PC-9 (cell line): ENCODE measurements at regions of chr16 and their contacts with region 1.

Region 1: GRCh38 chr16:77211880-77212740 is 12.9 kb downstream of the SYCE1L start:
- DNase-seq: peak in 1 of 2 experiments; percentile 71
- H3K4me3 ChIP-seq: peak overlapping the region; percentile 78
- H3K27ac ChIP-seq: no peak overlapping the region
- H3K4me1 ChIP-seq: peaks cover 18% of the 10 kb centered on the region
- H3K27me3 ChIP-seq: no peaks in the 10 kb centered on the region
- CTCF ChIP-seq: no peak; the same call in 1 of the 2 replicates

Region 2: DNA sequence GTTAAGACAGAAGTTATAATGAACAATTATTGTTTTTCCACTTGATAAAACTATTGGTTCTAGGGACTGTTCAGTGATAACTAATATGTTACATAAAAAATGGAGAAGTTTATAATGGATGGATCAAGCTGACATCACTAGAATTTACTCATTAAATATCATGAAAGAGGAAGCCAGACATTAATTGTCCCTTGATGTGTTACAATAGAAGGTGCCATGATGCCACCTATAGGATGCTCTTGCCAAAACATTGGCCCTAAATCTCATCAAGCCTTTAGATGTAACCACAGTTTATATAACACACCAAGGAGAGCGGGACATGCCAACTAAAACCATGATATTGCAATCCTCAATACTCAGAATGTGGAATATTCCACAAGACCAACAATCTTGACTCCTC is 169.0 kb before region 1 on chr16:
- CTCF ChIA-PET with region 1: no interaction called
- POLR2A ChIA-PET with region 1: no interaction called
- intact Hi-C with region 1: no loop called
- DNase-seq: no peak
- H3K4me3 ChIP-seq: no peak overlapping the region
- H3K27ac ChIP-seq: no peak overlapping the region
- H3K4me1 ChIP-seq: no peaks in the 10 kb centered on the region
- H3K27me3 ChIP-seq: no peaks in the 10 kb centered on the region
- CTCF ChIP-seq: peak; percentile 54

Region 3: GRCh38 chr16:77183137-77183536 is 29.0 kb before region 1 on chr16:
- CTCF ChIA-PET with region 1: interaction called, 11 read pairs
- POLR2A ChIA-PET with region 1: interaction called, 4 read pairs
- intact Hi-C with region 1: no loop called
- DNase-seq: peak in 1 of 2 experiments; percentile 41
- H3K4me3 ChIP-seq: no peak overlapping the region
- H3K27ac ChIP-seq: no peak overlapping the region
- H3K4me1 ChIP-seq: no peaks in the 10 kb centered on the region
- H3K27me3 ChIP-seq: no peaks in the 10 kb centered on the region
- CTCF ChIP-seq: no peak

Region 4: DNA sequence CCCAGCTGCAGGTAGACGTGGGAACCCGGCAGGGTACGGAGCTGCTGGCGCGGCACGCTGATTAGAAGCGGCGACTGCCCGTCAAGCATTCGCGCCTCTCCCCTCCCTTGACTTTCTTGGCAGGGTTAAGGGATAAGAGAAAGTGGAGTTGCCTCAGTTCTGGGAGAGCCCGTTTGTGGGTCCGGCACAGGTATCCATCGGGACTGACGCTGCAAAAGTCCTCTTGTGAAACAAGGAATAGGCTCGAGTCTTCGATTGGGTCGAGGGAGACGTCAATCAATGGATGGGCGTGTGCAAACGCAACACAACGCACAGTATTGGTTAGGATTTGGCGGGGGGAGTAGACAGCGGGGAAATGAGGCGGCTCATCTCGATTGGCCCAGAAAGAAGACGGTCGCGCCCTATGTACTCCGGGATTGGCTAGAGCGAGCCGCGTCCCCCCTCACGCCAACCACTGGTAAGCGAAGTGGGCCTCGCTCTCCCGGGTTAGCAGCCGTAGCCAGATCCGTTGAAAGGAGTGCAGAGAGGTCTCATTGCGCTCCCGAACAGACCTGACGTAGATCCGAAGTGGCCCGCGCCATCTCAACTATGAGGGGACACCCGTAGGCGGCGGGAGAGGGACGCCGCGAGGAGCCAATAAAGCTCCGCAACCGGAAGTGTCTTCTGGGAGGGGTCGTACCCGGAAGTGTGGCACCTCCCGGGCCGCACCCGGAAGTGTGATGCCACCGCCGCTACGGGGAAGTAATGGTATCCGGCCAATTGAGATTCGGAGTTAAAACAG is 21.4 kb before region 1 on chr16 and contains the start of gene MON1B:
- CTCF ChIA-PET with region 1: no interaction called
- POLR2A ChIA-PET with region 1: interaction called, 4 read pairs
- intact Hi-C with region 1: loop called (anchors 2 kb)
- DNase-seq: peak; percentile 93 to 97
- H3K4me3 ChIP-seq: peak within 1 kb of the TSS; percentile 87
- H3K27ac ChIP-seq: peak within 1 kb of the TSS; percentile 91
- H3K4me1 ChIP-seq: peaks cover 6% of the 10 kb centered on the region
- H3K27me3 ChIP-seq: no peaks in the 10 kb centered on the region
- CTCF ChIP-seq: no peak
- total RNA-seq, gene MON1B: 57.2 and 57.5 TPM in 2 replicates